GM12878 (cell line): ENCODE measurements at regions of chr2 and their contacts with region 1.

Region 1: DNA sequence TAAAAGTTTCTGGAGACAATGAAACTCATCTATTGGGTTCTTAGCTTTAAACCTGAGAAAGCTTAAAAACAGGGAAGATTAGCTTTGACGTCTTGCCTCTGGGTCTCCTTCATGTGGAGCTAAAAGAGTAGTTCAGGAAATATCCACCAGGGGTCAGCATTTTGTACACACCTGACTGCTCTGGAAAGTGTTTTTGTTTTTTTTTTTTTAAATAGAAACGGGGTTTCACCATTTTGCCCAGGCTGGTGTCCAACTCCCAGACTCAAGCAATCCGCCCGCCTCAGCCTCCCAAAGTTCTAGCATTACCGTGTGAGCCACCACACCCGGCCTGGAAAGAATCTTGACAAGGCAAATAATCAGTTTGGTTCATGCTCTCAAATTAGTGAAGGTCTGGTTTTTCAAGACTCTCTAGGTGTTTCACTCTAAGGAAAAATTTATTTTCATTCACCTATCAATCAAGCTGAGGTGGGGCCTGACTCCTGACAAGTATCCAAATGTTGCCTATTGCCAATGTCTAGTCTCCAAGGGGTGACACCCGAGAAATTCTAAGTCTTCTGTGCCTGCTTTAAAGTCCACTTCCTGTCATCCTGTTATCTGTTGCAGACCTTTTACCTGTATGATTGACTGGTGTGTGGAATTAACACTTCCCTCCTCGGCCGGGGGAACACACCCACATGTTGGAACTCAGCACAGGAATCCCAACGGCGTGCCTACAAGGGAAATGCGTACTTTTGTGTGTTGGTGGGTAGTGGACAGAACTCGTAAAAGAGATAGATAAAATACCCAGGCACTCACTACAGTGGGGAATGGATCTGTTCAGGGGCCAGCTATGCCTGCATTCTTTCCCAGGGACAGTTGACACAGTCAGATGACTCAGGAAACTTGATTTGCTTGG is 11.3 kb downstream of the IL1RN start:
- DNase-seq: peak; percentile 64
- ATAC-seq: peak; percentile 91
- H3K4me3 ChIP-seq: no peak overlapping the region
- H3K27ac ChIP-seq: no peak overlapping the region
- H3K4me1 ChIP-seq: peaks cover 4% of the 10 kb centered on the region; the same call in 1 of the 2 replicates
- H3K27me3 ChIP-seq: no peaks in the 10 kb centered on the region
- CTCF ChIP-seq: peak; percentile 66 to 77 (median 76)
- EP300 ChIP-seq: no peak
- POLR2A ChIP-seq: no peak
- RAD21 ChIP-seq: peak; percentile 71

Region 2: GRCh38 chr2:113000436-113000835 is 138.2 kb before region 1 on chr2:
- CTCF ChIA-PET with region 1: no interaction called
- POLR2A ChIA-PET with region 1: no interaction called
- RAD21 ChIA-PET with region 1: no interaction called
- SMC1A ChIA-PET with region 1: no interaction called
- in situ Hi-C with region 1: no loop called
- intact Hi-C with region 1: no loop called
- DNase-seq: no peak
- ATAC-seq: no peak
- H3K4me3 ChIP-seq: no peak overlapping the region
- H3K27ac ChIP-seq: no peak overlapping the region
- H3K4me1 ChIP-seq: no peaks in the 10 kb centered on the region
- H3K27me3 ChIP-seq: no peaks in the 10 kb centered on the region
- CTCF ChIP-seq: no peak
- EP300 ChIP-seq: no peak
- POLR2A ChIP-seq: no peak
- RAD21 ChIP-seq: no peak

Region 3: GRCh38 chr2:113116100-113116958 is 22.3 kb before region 1 on chr2:
- CTCF ChIA-PET with region 1: interaction called, 30 read pairs
- POLR2A ChIA-PET with region 1: no interaction called
- RAD21 ChIA-PET with region 1: interaction called, 3 read pairs
- SMC1A ChIA-PET with region 1: interaction called, 14 read pairs
- in situ Hi-C with region 1: no loop called
- intact Hi-C with region 1: no loop called
- DNase-seq: no peak
- ATAC-seq: peak; percentile 80
- H3K4me3 ChIP-seq: no peak overlapping the region
- H3K27ac ChIP-seq: peak overlapping the region; percentile 52
- H3K4me1 ChIP-seq: peaks cover 13% of the 10 kb centered on the region
- H3K27me3 ChIP-seq: no peaks in the 10 kb centered on the region
- CTCF ChIP-seq: no peak
- EP300 ChIP-seq: no peak
- POLR2A ChIP-seq: no peak
- RAD21 ChIP-seq: no peak

Region 4: GRCh38 chr2:113167115-113167932 is 28.6 kb after region 1 on chr2:
- CTCF ChIA-PET with region 1: interaction called, 195 read pairs
- POLR2A ChIA-PET with region 1: no interaction called
- RAD21 ChIA-PET with region 1: interaction called, 5 read pairs
- SMC1A ChIA-PET with region 1: interaction called, 6 read pairs
- in situ Hi-C with region 1: no loop called
- intact Hi-C with region 1: no loop called
- DNase-seq: no peak
- ATAC-seq: no peak; the same call in 2 of the 3 replicates
- H3K4me3 ChIP-seq: no peak overlapping the region
- H3K27ac ChIP-seq: no peak overlapping the region
- H3K4me1 ChIP-seq: peaks cover 11% of the 10 kb centered on the region
- H3K27me3 ChIP-seq: no peaks in the 10 kb centered on the region
- CTCF ChIP-seq: no peak
- EP300 ChIP-seq: no peak
- POLR2A ChIP-seq: no peak
- RAD21 ChIP-seq: no peak

Region 5: GRCh38 chr2:113192438-113193100 is 53.9 kb after region 1 on chr2:
- CTCF ChIA-PET with region 1: interaction called, 97 read pairs
- POLR2A ChIA-PET with region 1: no interaction called
- RAD21 ChIA-PET with region 1: interaction called, 37 read pairs
- SMC1A ChIA-PET with region 1: interaction called, 3 read pairs
- in situ Hi-C with region 1: no loop called
- intact Hi-C with region 1: no loop called
- DNase-seq: no peak
- ATAC-seq: no peak
- H3K4me3 ChIP-seq: no peak overlapping the region
- H3K27ac ChIP-seq: no peak overlapping the region
- H3K4me1 ChIP-seq: no peaks in the 10 kb centered on the region
- H3K27me3 ChIP-seq: no peaks in the 10 kb centered on the region
- CTCF ChIP-seq: peak in 1 of 3 experiments; percentile 13; a peak in 1 of 6 replicates
- EP300 ChIP-seq: no peak
- POLR2A ChIP-seq: no peak
- RAD21 ChIP-seq: no peak

Region 6: GRCh38 chr2:113218283-113219091 is 79.8 kb after region 1 on chr2:
- CTCF ChIA-PET with region 1: interaction called, 11 read pairs
- POLR2A ChIA-PET with region 1: no interaction called
- RAD21 ChIA-PET with region 1: interaction called, 8 read pairs
- SMC1A ChIA-PET with region 1: interaction called, 3 read pairs
- in situ Hi-C with region 1: no loop called
- intact Hi-C with region 1: no loop called
- DNase-seq: no peak
- ATAC-seq: no peak
- H3K4me3 ChIP-seq: no peak overlapping the region
- H3K27ac ChIP-seq: no peak overlapping the region
- H3K4me1 ChIP-seq: peaks cover 5% of the 10 kb centered on the region; the same call in 1 of the 2 replicates
- H3K27me3 ChIP-seq: no peaks in the 10 kb centered on the region
- CTCF ChIP-seq: no peak
- EP300 ChIP-seq: no peak
- POLR2A ChIP-seq: no peak
- RAD21 ChIP-seq: no peak

Region 7: DNA sequence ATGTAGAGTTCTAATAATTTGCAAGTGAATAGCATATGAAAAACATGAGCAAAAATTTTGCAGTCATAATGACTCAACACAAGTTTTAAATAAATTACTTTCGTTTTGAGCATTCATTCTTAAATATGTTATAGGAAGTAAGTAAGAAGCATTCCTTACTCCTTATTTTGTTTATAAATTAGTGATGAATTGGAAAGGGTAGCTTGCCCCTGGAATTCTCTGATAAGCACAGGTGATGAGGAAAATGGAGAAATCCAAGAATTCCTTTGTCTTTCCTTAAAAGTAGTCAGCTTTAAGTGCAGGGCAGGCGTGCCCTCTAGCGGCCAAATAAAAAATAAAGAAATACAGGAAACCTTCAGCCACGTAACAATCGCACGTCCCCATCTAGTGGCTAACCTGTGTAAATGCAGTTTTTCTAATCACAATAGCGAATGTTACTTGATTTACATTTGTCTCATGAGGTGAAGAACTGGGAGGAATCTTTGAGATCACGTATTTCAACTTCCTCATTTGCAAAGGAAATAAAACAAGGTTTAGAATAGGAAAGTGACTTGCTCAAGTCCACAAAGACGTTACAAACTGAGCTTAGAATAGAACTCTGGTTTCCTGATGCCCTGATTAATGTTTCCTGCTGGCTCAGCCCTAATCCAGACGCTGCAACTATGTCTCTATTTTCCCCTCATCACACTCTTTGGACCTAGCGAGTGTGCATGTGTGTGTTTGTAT is 251.6 kb after region 1 on chr2:
- CTCF ChIA-PET with region 1: interaction called, 63 read pairs
- POLR2A ChIA-PET with region 1: no interaction called
- RAD21 ChIA-PET with region 1: interaction called, 21 read pairs
- SMC1A ChIA-PET with region 1: interaction called, 34 read pairs
- in situ Hi-C with region 1: no loop called
- intact Hi-C with region 1: loop called (anchors 2 kb)
- DNase-seq: peak; percentile 71
- ATAC-seq: peak; percentile 96
- H3K4me3 ChIP-seq: 0 out of 2 replicates have a peak overlapping the region, but pooled peaks have one; percentile 30
- H3K27ac ChIP-seq: peak overlapping the region; percentile 61; the same call in 1 of the 2 replicates
- H3K4me1 ChIP-seq: peaks cover 3% of the 10 kb centered on the region
- H3K27me3 ChIP-seq: no peaks in the 10 kb centered on the region
- CTCF ChIP-seq: peak; percentile 75 to 97 (median 95)
- EP300 ChIP-seq: no peak
- POLR2A ChIP-seq: no peak
- RAD21 ChIP-seq: peak; percentile 91